HCT116 (cell line): ENCODE measurements at regions of chr11 and their contacts with region 1.

Region 1: DNA sequence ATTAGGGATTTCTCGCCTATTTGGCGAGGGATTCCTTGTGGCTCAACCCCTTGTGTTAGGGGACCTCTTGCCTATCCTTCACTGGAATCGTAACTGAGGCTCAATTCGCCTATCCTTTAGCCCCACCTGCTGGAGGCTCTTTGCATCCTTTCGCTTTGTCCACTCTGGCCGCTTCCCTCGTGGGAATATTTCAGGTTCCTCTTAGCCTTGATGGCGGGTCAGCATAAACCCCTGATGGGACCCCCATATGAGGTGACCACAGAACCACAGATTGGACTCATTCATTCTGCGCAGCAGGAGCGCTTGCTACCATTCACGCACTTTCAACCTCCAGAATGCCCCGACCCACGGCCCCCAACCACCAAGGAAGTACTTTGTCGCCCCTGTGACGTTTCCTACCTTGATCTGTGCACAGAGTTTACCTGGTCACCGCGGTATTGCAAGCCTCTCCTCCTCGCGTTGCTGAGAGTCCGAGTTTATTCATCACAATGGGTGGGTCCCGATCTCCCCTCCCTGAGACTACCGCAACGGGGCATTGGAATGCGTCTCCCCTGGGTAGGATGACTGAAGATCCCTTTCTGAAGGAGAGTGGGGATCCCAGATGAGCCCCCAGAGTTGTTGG is at the start of gene OR52N2:
- DNase-seq: peak; percentile 61
- ATAC-seq: peak; percentile 97
- H3K4me3 ChIP-seq: peak within 1 kb of the TSS in 1 of 2 experiments; percentile 11; a peak in 2 of 4 replicates
- H3K27ac ChIP-seq: no peak within 1 kb of the TSS
- H3K4me1 ChIP-seq: peaks cover 0 to 4% of the 10 kb centered on the region in 2 experiments; a peak in 1 of 4 replicates
- H3K27me3 ChIP-seq: peaks cover 61% of the 10 kb centered on the region
- CTCF ChIP-seq: peak; percentile 70 to 85 (median 85)
- POLR2A ChIP-seq: no peak
- RAD21 ChIP-seq: peak; percentile 88
- total RNA-seq, gene OR52N2: not detected

Region 2: GRCh38 chr11:4626207-4627099 is 1182.2 kb before region 1 on chr11:
- CTCF ChIA-PET with region 1: interaction called, 3 read pairs
- POLR2A ChIA-PET with region 1: no interaction called
- RAD21 ChIA-PET with region 1: no interaction called
- intact Hi-C with region 1: loop called (anchors 2 kb)
- DNase-seq: peak; percentile 75
- ATAC-seq: peak; percentile 95
- H3K4me3 ChIP-seq: no peak overlapping the region
- H3K27ac ChIP-seq: no peak overlapping the region
- H3K4me1 ChIP-seq: no peaks in the 10 kb centered on the region
- H3K27me3 ChIP-seq: peaks cover 12% of the 10 kb centered on the region; the same call in 1 of the 2 replicates
- CTCF ChIP-seq: peak; percentile 62 to 83 (median 70)
- POLR2A ChIP-seq: no peak
- RAD21 ChIP-seq: peak; percentile 80

Region 3: GRCh38 chr11:5123802-5124521 is 684.6 kb before region 1 on chr11:
- CTCF ChIA-PET with region 1: interaction called, 4 read pairs
- POLR2A ChIA-PET with region 1: no interaction called
- RAD21 ChIA-PET with region 1: no interaction called
- intact Hi-C with region 1: loop called (anchors 1 kb)
- DNase-seq: peak; percentile 56
- ATAC-seq: peak; percentile 99
- H3K4me3 ChIP-seq: no peak overlapping the region
- H3K27ac ChIP-seq: no peak overlapping the region
- H3K4me1 ChIP-seq: no peaks in the 10 kb centered on the region
- H3K27me3 ChIP-seq: peaks cover 64% of the 10 kb centered on the region
- CTCF ChIP-seq: peak; percentile 60 to 95 (median 83)
- POLR2A ChIP-seq: no peak
- RAD21 ChIP-seq: peak; percentile 82

Region 4: GRCh38 chr11:5291207-5291838 is 517.3 kb before region 1 on chr11:
- CTCF ChIA-PET with region 1: no interaction called
- POLR2A ChIA-PET with region 1: no interaction called
- RAD21 ChIA-PET with region 1: no interaction called
- intact Hi-C with region 1: loop called (anchors 5 kb)
- DNase-seq: peak; percentile 35
- ATAC-seq: peak; percentile 91
- H3K4me3 ChIP-seq: no peak overlapping the region
- H3K27ac ChIP-seq: no peak overlapping the region
- H3K4me1 ChIP-seq: peaks cover 0 to 5% of the 10 kb centered on the region in 2 experiments; a peak in 1 of 4 replicates
- H3K27me3 ChIP-seq: no peaks in the 10 kb centered on the region
- CTCF ChIP-seq: peak; percentile 71 to 87 (median 79)
- POLR2A ChIP-seq: no peak
- RAD21 ChIP-seq: peak; percentile 82

Region 5: GRCh38 chr11:5600374-5600851 is 208.2 kb before region 1 on chr11:
- CTCF ChIA-PET with region 1: no interaction called
- POLR2A ChIA-PET with region 1: no interaction called
- RAD21 ChIA-PET with region 1: no interaction called
- intact Hi-C with region 1: loop called (anchors 1 kb)
- DNase-seq: peak; percentile 81
- ATAC-seq: peak; percentile 84
- H3K4me3 ChIP-seq: no peak overlapping the region
- H3K27ac ChIP-seq: no peak overlapping the region
- H3K4me1 ChIP-seq: peaks cover 3 to 25% of the 10 kb centered on the region in 2 experiments; a peak in 3 of 4 replicates
- H3K27me3 ChIP-seq: no peaks in the 10 kb centered on the region
- CTCF ChIP-seq: peak; percentile 85 to 98 (median 95)
- POLR2A ChIP-seq: no peak
- RAD21 ChIP-seq: peak; percentile 66

Region 6: DNA sequence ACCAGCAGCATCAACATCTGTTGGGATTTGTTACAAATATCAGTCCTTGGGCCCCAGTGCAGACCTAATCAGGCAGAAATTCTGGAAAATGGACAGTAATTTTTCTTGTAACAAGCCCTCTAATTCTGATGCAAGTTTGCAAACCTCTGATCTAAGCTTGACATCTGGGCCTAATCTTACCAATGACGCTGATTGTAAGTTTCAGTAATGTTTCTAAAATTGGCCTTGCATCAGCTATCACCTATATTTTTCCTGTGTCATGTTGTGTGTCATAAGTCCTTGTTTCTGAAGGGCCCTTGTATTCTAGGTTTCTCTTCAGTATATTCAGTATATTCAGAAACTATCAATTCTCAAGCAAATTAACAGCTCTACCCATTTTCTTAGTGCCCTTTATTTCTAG is 1154.1 kb after region 1 on chr11:
- CTCF ChIA-PET with region 1: no interaction called
- POLR2A ChIA-PET with region 1: no interaction called
- RAD21 ChIA-PET with region 1: no interaction called
- intact Hi-C with region 1: no loop called
- DNase-seq: no peak
- ATAC-seq: no peak
- H3K4me3 ChIP-seq: no peak overlapping the region
- H3K27ac ChIP-seq: no peak overlapping the region
- H3K4me1 ChIP-seq: no peaks in the 10 kb centered on the region
- H3K27me3 ChIP-seq: no peaks in the 10 kb centered on the region
- CTCF ChIP-seq: no peak
- POLR2A ChIP-seq: no peak
- RAD21 ChIP-seq: no peak